ENCODE measurements at regions of chr22 and their contacts with region 1.

Region 1: GRCh38 chr22:41873391-41873790 is 40.5 kb downstream of the SREBF2 start:
- DNase-seq: no peak

Region 2: DNA sequence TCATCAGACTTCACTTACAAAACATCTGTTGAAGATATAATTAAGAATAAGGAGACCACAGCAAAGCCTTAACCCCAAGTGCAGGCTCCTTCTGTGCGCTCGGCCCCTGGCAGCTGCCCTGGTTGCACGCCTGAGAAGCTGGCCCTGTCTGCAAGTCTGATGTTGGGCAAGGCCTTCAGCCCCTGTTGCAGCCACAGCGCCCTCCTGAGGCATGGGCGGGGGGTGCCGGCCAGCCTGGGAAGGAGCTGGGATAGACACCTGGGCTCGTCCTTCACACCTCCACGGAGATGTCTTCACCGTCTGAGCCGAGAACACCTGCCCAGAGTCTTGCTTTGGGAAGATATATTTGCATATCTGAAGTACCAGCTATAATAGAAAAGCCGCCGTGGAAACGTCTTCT is 1642.5 kb after region 1 on chr22:
- intact Hi-C with region 1: loop called in 1 of 2 experiments (anchors 10 kb)
- DNase-seq: no peak

Measured in posterior vena cava (tissue), 2 donors.